B cell (primary cell): ENCODE measurements at regions of chr4 and their contacts with region 1.

Region 1: GRCh38 chr4:98995183-98996055 is at the start of gene METAP1:
- DNase-seq: peak; percentile 97
- ATAC-seq: peak; percentile 85
- H3K4me3 ChIP-seq: peak within 1 kb of the TSS; percentile 68 to 90 (median 83)
- H3K4me3 Mint-ChIP-seq: peak within 1 kb of the TSS; percentile 92
- H3K27ac ChIP-seq: peak within 1 kb of the TSS; percentile 86 to 89
- H3K27ac Mint-ChIP-seq: peak within 1 kb of the TSS; percentile 98
- H3K4me1 ChIP-seq: peaks cover 11 to 15% of the 10 kb centered on the region in 2 donors
- H3K4me1 Mint-ChIP-seq: peaks cover 29% of the 10 kb centered on the region
- H3K27me3 ChIP-seq: no peaks in the 10 kb centered on the region
- H3K27me3 Mint-ChIP-seq: peaks cover 4% of the 10 kb centered on the region
- CTCF ChIP-seq: peak; percentile 75
- total RNA-seq, gene METAP1: 40.0 and 42.6 TPM in 2 replicates

Region 2: DNA sequence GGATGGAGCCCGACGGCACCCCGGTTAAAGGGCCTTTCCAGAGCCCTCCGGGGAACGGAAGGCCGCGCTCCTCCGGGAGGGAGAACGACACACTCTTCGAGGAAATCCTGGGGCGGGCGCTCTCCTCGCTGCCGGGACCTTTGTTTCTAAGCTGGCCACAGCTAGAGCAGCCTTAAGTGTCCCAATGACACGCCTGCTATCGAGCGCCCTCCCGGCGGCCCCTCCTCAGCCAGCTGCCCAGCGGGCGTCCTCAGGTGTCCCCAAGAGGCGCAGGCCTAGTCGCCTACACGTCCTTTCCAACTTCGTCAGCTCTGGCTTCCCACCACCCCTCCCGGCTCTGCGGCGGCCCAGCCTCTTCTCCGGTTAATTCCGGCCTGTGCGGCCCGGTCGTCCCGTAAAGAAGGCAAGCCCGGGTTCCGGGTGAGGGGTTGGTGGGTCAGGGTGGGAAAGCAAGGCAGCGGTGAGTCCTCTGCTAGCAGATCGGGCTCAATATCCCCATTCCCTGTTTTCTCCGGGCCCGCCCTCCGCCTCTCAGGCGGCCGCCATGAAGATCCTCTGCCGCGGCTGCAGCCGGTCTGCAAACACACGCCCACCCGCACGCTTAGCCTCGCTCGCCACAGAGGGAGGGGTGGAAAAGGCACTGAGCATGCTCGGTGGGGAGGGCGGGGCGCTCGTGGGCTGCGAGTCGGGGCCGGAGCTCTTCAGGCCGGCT is 734.7 kb before region 1 on chr4:
- CTCF ChIA-PET with region 1: interaction called, 6 read pairs
- POLR2A ChIA-PET with region 1: interaction called, 5 read pairs
- intact Hi-C with region 1: loop called (anchors 1 kb)
- DNase-seq: peak; percentile 95
- ATAC-seq: peak; percentile 91
- H3K4me3 ChIP-seq: peak overlapping the region; percentile 71 to 98 (median 95)
- H3K4me3 Mint-ChIP-seq: peak overlapping the region; percentile 97
- H3K27ac ChIP-seq: peak overlapping the region; percentile 84 to 90
- H3K27ac Mint-ChIP-seq: peak overlapping the region; percentile 98
- H3K4me1 ChIP-seq: peaks cover 18 to 25% of the 10 kb centered on the region in 2 donors
- H3K4me1 Mint-ChIP-seq: peaks cover 40% of the 10 kb centered on the region
- H3K27me3 ChIP-seq: no peaks in the 10 kb centered on the region
- H3K27me3 Mint-ChIP-seq: no peaks in the 10 kb centered on the region
- CTCF ChIP-seq: no peak

Region 3: DNA sequence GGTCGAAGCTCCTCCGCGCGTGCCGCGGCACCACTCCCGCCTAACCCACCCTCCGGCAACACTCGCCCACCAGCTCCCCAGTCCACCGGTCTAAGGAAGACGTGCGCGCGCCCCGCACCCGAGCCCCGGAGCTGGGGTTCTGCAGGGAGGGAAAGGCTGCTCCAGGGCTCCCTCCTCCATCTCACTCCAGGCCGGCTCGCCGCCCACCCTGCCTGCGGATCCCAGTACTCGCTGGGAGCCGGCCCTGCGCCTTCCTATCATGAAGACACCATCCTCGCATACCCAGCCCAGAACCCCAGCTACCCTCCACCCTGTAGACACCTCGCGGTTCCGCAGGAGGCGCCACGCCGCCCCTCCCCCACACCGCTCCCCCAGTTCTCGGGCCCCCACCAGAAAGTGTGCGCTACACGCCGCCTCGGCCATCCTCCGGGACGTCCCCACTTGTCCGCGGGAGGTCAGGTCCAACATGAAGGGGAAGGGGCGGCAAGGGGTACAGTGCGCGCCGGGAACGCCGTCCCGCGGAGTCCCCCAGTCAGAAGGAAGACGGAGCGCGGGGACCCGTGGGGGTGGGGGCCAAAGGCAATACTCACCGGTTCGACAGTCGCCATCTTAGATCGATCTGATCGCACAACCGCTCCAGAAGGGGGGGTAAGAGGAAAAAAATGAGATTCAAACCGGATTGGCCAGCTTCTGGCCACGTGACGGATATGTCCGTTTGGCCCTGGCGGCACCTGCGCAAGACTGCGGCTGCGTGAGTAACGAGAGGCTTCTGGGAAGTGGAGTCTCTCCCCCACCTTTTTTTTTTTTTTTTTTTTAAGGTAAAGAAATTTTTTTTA is 66.7 kb before region 1 on chr4 and contains the start of gene EIF4E:
- CTCF ChIA-PET with region 1: interaction called, 29 read pairs
- POLR2A ChIA-PET with region 1: interaction called, 32 read pairs
- intact Hi-C with region 1: loop called (anchors 1 kb)
- DNase-seq: peak; percentile 99
- ATAC-seq: peak; percentile 77
- H3K4me3 ChIP-seq: peak within 1 kb of the TSS; percentile 95 to 100 (median 98)
- H3K4me3 Mint-ChIP-seq: peak within 1 kb of the TSS; percentile 99
- H3K27ac ChIP-seq: peak within 1 kb of the TSS; percentile 91 to 93
- H3K27ac Mint-ChIP-seq: peak within 1 kb of the TSS; percentile 99
- H3K4me1 ChIP-seq: peaks cover 31 to 32% of the 10 kb centered on the region in 2 donors
- H3K4me1 Mint-ChIP-seq: peaks cover 50% of the 10 kb centered on the region
- H3K27me3 ChIP-seq: no peaks in the 10 kb centered on the region
- H3K27me3 Mint-ChIP-seq: no peaks in the 10 kb centered on the region
- CTCF ChIP-seq: peak; percentile 67
- total RNA-seq, gene EIF4E: 71.1 and 71.2 TPM in 2 replicates

Region 4: DNA sequence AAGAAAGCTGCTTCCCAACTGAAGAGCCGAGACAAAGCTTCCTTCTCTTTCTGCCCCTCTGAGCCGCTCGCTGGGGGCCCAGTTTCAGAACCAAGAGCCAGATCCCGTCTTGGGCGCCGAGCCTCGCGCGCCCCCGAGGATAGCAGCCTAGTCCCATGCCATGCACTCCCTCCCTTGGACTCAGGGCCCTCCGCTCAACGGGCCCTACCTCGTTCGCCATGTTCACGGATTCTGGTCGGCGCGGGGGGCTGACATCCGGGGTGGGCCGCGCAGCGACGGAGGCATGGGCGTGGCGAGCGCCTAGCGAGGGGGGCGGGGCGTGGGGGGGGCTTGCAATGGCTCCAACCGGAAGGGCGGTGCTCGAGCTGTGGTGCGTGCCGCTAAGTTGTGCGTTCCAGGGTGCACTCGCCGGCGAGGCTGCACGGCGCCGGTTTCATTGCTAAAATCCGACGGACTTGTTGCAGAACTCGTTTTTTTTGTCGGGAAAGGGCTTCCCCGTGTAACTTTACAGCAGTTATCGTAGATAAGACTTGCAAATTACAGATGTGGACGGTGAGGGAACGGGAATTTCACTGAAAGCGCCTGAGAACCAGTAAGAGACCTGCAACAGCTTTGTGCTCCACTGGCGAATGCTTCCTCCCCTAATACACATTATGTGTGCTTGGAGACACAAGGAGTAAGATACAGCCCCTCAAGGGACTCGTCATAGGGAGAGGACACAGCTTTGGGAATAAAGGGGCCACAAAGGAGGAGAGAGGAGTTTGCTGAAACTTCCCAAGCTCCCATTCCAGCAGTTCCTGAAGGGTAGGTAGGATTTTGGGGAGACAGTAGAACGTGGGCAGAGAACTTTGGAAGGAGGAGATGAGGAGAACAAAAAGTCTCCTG is 93.3 kb after region 1 on chr4 and contains the start of gene ADH5:
- CTCF ChIA-PET with region 1: interaction called, 18 read pairs
- POLR2A ChIA-PET with region 1: interaction called, 8 read pairs
- intact Hi-C with region 1: loop called (anchors 1 kb)
- DNase-seq: peak; percentile 90
- ATAC-seq: peak; percentile 95
- H3K4me3 ChIP-seq: peak within 1 kb of the TSS; percentile 75 to 99 (median 96)
- H3K4me3 Mint-ChIP-seq: peak within 1 kb of the TSS; percentile 98
- H3K27ac ChIP-seq: peak within 1 kb of the TSS; percentile 84
- H3K27ac Mint-ChIP-seq: peak within 1 kb of the TSS; percentile 98
- H3K4me1 ChIP-seq: peaks cover 15 to 25% of the 10 kb centered on the region in 2 donors
- H3K4me1 Mint-ChIP-seq: peaks cover 46% of the 10 kb centered on the region
- H3K27me3 ChIP-seq: no peaks in the 10 kb centered on the region
- H3K27me3 Mint-ChIP-seq: no peaks in the 10 kb centered on the region
- CTCF ChIP-seq: no peak
- total RNA-seq, gene ADH5: 59.2 and 65.6 TPM in 2 replicates

Region 5: DNA sequence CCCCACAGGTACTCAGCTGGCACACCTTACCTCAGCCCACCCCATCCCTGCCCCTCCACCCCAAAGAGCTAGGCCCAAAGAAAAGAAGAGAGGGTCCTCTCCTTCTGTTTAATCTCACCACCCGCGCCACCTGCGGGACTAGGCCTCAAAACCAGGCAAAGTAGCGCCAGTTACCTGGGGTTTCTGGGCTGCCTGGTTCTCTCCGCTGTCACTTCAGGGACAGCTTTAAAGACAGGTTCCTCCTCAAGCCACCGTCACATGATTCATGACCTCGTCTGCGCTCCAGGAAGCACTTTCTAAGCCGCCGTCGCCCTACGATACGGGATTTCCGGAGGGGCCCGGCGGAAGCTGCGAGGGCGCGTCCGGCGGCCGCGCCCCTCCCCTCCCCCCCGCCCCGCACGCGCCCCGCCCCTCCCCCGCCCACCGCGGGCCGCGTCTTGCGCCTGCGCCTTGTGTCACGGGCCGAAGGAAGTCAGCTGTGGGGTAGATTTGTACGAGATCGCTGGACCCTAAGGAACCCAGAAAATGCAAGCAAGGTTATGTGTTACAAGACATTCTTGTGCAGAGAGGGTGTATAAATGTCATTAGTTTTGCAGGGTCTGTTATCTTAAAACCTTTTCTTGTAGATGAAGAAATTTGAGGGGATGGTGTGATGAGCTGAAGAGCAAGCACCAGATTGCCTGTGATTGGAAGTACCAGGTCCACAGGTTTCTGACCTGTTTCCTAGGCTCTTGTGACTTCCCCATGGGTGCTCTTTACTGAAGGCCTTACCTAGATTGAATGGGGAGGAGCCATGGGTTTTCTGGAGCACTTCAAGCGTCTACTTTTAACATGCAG is 899.0 kb after region 1 on chr4 and contains the start of gene LAMTOR3:
- CTCF ChIA-PET with region 1: interaction called, 3 read pairs
- POLR2A ChIA-PET with region 1: no interaction called
- intact Hi-C with region 1: loop called (anchors 2 kb)
- DNase-seq: peak; percentile 95
- ATAC-seq: peak; percentile 97
- H3K4me3 ChIP-seq: peak within 1 kb of the TSS; percentile 32 to 94 (median 79)
- H3K4me3 Mint-ChIP-seq: peak within 1 kb of the TSS; percentile 98
- H3K27ac ChIP-seq: peak within 1 kb of the TSS; percentile 74 to 97
- H3K27ac Mint-ChIP-seq: peak within 1 kb of the TSS; percentile 95
- H3K4me1 ChIP-seq: peaks cover 14 to 18% of the 10 kb centered on the region in 2 donors
- H3K4me1 Mint-ChIP-seq: peaks cover 32% of the 10 kb centered on the region
- H3K27me3 ChIP-seq: no peaks in the 10 kb centered on the region
- H3K27me3 Mint-ChIP-seq: no peaks in the 10 kb centered on the region
- CTCF ChIP-seq: no peak
- total RNA-seq, gene LAMTOR3: 18.0 and 20.1 TPM in 2 replicates